OCI-LY7 (cell line): ENCODE measurements at regions of chr3 and their contacts with region 1.

Region 1: GRCh38 chr3:126959921-126960603 is 22.9 kb upstream of the PLXNA1 start:
- DNase-seq: no peak
- H3K4me3 ChIP-seq: no peak overlapping the region
- H3K27ac ChIP-seq: no peak overlapping the region
- H3K4me1 ChIP-seq: peaks cover 24% of the 10 kb centered on the region
- CTCF ChIP-seq: no peak

Region 2: DNA sequence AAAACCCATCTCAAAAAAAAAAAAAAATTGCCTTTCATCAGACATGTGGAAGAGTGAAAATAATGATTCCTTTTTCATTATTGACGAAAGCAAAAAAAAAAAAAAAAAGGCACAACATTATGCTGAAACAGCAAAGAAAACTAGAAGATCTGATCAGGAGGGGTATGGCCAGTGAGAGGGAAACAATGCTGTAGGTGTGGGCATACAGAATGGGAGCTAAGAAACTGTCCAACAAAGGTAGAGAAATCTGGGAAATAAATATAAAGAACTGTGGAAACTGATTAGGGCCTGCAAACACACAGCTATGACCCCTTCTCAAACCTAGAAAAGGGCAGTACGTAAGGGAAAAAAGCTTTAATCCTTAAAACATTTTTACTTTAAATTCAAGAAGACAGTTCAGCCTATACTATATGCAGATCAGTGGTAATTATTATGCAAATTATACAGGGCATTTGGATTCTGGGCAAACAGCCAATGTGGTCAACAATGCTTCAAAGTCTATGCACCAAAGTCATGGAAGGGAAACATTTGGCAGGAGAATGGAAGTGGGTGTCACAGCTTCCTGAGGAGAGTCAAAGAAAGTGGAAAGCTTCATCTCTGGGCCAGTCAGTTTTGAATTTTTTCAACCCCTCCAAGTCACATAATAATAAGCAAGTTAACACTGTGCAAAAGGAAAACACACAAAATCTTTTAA is 1679.2 kb before region 1 on chr3:
- CTCF ChIA-PET with region 1: no interaction called
- POLR2A ChIA-PET with region 1: no interaction called
- intact Hi-C with region 1: no loop called
- DNase-seq: no peak
- H3K4me3 ChIP-seq: no peak overlapping the region
- H3K27ac ChIP-seq: no peak overlapping the region
- H3K4me1 ChIP-seq: no peaks in the 10 kb centered on the region
- CTCF ChIP-seq: no peak

Region 3: GRCh38 chr3:126493739-126494138 is 466.3 kb before region 1 on chr3:
- CTCF ChIA-PET with region 1: interaction called, 4 read pairs
- POLR2A ChIA-PET with region 1: no interaction called
- intact Hi-C with region 1: loop called (anchors 1 kb)
- DNase-seq: peak; percentile 71
- H3K4me3 ChIP-seq: no peak overlapping the region
- H3K27ac ChIP-seq: no peak overlapping the region
- H3K4me1 ChIP-seq: peaks cover 37% of the 10 kb centered on the region
- CTCF ChIP-seq: no peak

Region 4: DNA sequence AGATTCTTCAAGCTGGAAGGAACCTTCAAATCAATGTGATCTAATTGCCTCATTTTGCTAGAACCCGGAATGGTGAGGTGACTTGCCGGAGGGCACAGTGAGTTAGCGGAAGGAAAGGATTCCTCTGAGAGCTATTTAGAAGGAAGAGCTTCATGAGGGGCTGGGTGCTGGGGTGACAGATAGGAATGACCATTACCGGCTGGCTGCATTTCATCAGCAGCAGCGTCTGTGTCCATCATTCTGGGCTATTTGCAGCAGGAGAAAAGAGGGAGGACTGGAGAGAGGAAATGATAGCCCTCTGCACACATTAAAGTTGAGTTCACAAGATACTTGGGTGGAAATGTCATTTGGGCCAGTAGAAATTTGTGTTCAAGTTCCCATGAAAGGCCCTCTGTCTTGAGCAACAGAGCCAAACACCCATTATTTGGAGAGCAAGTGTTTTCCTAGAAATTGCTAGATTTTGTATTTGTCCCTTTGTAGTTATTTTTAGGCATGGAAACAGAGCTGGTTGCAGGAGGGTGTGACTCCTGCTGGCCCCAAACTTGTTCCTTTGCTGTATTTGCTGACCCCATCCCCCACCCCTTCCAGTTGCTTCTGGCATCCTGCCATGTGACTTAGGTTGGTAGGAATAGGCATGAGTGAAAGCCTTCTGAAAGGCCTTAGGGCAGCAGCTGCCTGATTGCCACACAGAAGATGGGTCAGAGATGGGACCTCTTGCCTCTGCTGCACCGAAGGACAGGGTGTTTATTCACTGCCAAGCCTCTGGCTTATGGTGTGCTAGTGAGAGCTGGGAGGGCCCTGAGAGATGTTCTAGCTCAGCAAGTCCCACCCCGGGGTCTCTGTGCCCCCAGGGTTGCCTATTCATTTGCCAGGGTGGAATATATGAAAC is 64.6 kb before region 1 on chr3:
- CTCF ChIA-PET with region 1: no interaction called
- POLR2A ChIA-PET with region 1: no interaction called
- intact Hi-C with region 1: no loop called
- DNase-seq: no peak
- H3K4me3 ChIP-seq: no peak overlapping the region
- H3K27ac ChIP-seq: no peak overlapping the region
- H3K4me1 ChIP-seq: no peaks in the 10 kb centered on the region
- CTCF ChIP-seq: no peak

Region 5: DNA sequence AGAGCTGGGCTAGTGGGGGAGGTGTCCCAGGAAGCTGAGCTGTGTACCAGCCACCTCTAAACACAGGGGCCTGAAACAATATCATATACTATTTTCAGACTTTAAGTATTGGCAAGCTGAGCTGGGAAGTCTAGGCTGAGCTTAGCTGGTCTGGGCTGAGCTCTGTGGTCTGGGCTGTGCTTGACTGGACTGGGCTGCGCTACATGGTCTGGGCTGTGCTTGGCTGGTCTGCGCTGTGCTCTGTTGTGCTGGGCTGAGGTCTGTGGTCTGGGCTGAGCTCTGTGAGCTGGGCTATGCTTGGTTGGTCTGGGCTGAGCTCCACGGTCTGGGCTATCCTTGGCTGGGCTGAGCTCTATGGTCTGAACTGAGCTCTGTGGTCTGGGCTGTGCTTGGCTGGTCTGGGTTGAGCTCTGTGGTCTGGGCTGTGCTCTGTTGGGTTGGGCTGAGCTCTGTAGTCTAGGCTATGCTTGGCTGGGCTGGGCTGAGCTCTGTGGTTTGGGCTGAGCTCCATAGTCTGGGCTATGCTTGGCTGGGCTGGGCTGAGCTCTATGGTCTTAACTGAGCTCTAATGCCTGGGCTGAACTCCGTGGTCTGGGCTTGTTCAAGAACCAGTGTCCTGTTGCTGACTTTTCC is 114.8 kb after region 1 on chr3:
- CTCF ChIA-PET with region 1: no interaction called
- POLR2A ChIA-PET with region 1: interaction called, 3 read pairs
- intact Hi-C with region 1: loop called (anchors 1 kb)
- DNase-seq: peak; percentile 96
- H3K4me3 ChIP-seq: peak overlapping the region; percentile 51
- H3K27ac ChIP-seq: peak overlapping the region; percentile 94
- H3K4me1 ChIP-seq: peaks cover 42% of the 10 kb centered on the region
- CTCF ChIP-seq: no peak